Right lobe of liver (tissue), 6 donors: ENCODE measurements at regions of chr3 and their contacts with region 1.

Region 1: DNA sequence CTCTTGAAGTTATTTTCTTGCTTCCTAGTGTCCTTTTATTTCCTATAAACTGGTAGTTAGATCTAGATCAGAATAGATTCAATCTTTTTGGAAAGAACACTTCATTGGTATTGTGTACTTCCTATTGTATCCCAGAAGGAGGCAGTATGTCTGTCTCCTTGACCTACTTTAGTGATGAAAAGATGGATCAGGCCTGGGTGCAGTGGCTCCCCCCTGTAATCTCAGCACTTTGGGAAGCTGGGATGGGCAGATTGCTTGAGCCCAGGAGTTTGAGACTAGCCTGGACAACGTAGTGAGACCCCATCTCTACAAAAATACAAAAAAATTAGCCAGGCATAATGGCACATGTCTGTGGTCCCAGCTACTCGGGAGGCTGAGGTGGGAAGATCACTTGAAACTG is 12.0 kb downstream of the BSN start:
- DNase-seq: no peak
- ATAC-seq: peak in 1 of 4 donors; percentile 36
- H3K4me3 ChIP-seq: no peak overlapping the region
- H3K27ac ChIP-seq: no peak overlapping the region
- H3K4me1 ChIP-seq: peaks cover 0 to 14% (median 0%) of the 10 kb centered on the region in 4 donors
- H3K27me3 ChIP-seq: no peaks in the 10 kb centered on the region
- CTCF ChIP-seq: peak in 3 of 4 donors; percentile 12 to 44 (median 17)
- POLR2A ChIP-seq: no peak

Region 2: GRCh38 chr3:48588230-48588629 is 978.1 kb before region 1 on chr3:
- intact Hi-C with region 1: loop called in 1 of 2 experiments (anchors 10 kb)
- DNase-seq: no peak
- ATAC-seq: no peak
- H3K4me3 ChIP-seq: no peak overlapping the region
- H3K27ac ChIP-seq: no peak overlapping the region
- H3K4me1 ChIP-seq: no peaks in the 10 kb centered on the region
- H3K27me3 ChIP-seq: no peaks in the 10 kb centered on the region
- CTCF ChIP-seq: no peak
- POLR2A ChIP-seq: no peak

Region 3: GRCh38 chr3:49469936-49470713 is 96.2 kb before region 1 on chr3 and contains the start of gene DAG1:
- intact Hi-C with region 1: no loop called
- DNase-seq: peak; percentile 98 to 99 (median 99)
- ATAC-seq: peak; percentile 90 to 93 (median 90)
- H3K4me3 ChIP-seq: peak within 1 kb of the TSS; percentile 85 to 96 (median 93)
- H3K27ac ChIP-seq: peak within 1 kb of the TSS; percentile 74 to 95 (median 88)
- H3K4me1 ChIP-seq: peaks cover 0 to 34% (median 13%) of the 10 kb centered on the region in 4 donors
- H3K27me3 ChIP-seq: no peaks in the 10 kb centered on the region
- CTCF ChIP-seq: no peak
- POLR2A ChIP-seq: peak; percentile 93
- total RNA-seq, gene DAG1: 54.5 to 92.5 (median 65.2) TPM

Region 4: DNA sequence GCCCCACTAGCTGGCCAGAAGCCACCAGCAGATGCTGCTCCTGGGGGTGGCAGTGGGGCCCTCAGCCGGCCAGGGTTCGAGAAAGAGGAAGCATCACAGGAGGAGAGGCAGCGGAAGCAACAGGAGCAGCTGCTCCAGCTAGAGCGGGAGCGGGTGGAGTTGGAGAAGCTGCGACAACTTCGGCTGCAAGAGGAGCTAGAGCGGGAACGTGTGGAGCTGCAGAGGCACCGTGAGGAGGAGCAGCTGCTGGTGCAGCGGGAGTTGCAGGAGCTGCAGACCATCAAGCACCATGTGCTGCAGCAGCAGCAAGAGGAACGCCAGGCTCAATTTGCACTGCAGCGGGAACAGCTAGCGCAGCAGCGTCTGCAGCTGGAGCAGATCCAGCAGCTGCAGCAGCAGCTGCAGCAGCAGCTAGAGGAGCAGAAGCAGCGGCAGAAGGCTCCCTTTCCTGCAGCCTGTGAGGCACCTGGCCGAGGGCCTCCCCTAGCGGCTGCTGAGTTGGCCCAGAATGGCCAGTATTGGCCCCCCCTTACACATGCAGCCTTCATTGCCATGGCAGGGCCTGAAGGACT is 90.3 kb after region 1 on chr3:
- intact Hi-C with region 1: loop called in 1 of 2 experiments (anchors 10 kb)
- DNase-seq: no peak
- ATAC-seq: no peak
- H3K4me3 ChIP-seq: no peak overlapping the region
- H3K27ac ChIP-seq: no peak overlapping the region
- H3K4me1 ChIP-seq: no peaks in the 10 kb centered on the region
- H3K27me3 ChIP-seq: no peaks in the 10 kb centered on the region
- CTCF ChIP-seq: no peak
- POLR2A ChIP-seq: no peak

Region 5: DNA sequence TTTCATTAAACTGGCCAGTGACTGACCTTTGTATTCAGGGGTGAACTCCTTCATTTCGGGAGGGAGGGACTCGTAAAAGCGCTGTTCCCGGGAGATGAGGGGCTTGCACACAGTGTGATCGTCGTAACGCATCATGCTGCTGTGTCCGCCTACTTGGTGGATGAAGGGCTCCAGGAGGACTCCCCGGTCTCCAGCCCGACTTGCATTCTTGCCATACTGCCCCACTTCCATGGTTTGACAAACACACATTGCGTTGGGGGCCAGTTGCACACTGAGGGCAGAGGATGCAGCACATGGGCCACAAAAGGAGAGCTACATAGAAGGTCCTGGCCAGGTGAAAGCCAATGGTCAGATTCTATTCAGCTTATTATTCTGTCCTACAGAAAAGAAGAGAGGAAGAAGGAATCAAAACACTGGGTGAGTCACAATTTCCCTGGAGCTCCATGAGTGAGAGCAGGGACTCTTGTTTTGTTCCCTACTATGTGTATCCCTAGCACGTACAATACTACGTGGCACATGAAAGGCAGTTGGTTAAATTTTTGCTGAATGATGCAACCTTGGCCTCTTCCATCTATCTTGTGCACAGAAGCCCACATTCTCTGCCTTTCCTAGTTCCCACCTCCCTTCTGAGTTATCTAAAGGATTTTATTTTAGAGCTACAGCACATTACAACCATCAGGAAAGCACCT is 181.6 kb after region 1 on chr3:
- intact Hi-C with region 1: no loop called
- DNase-seq: no peak
- ATAC-seq: peak in 1 of 4 donors; percentile 23
- H3K4me3 ChIP-seq: no peak overlapping the region
- H3K27ac ChIP-seq: no peak overlapping the region
- H3K4me1 ChIP-seq: peaks cover 0 to 9% (median 4%) of the 10 kb centered on the region in 4 donors
- H3K27me3 ChIP-seq: no peaks in the 10 kb centered on the region
- CTCF ChIP-seq: no peak
- POLR2A ChIP-seq: no peak